ENCODE measurements at regions of chr3 and their contacts with region 1.

Region 1: DNA sequence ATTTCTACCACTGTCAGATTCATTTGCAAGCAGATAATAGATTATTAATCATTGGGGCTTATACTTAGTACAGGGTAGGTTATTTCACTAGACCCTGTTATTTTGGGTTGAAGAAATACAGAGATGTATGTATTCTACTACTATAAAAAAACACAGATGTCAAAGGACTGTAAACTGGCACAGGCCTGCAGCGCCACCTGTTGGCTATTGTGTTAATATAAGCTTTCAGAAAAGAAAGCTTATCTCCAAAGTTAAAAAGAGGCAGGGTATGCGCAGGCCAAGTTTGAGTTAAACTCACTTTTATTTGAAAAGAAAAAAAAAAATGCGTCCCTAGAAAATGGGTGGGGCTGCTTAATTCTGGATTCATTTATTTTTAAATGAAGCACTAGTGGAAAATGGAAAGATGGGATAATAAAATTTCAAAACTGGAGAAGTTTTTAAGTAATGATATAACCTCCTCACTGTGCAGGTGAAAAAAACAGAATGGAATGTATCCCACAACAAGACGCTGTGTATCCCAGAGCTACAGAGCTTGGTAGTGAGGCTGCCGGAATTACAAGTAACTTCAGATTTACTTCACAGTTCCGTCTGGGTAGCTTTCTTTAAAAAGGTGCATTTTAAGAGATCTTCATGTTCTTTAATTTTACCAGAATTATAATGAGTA is 407.2 kb upstream of the TGFBR2 start:
- DNase-seq: peak; percentile 76
- H3K4me3 Mint-ChIP-seq: no peak overlapping the region
- H3K27ac Mint-ChIP-seq: peak overlapping the region; percentile 12
- H3K4me1 Mint-ChIP-seq: peaks cover 32% of the 10 kb centered on the region
- H3K27me3 Mint-ChIP-seq: no peaks in the 10 kb centered on the region
- CTCF ChIP-seq: peak; percentile 60

Region 2: DNA sequence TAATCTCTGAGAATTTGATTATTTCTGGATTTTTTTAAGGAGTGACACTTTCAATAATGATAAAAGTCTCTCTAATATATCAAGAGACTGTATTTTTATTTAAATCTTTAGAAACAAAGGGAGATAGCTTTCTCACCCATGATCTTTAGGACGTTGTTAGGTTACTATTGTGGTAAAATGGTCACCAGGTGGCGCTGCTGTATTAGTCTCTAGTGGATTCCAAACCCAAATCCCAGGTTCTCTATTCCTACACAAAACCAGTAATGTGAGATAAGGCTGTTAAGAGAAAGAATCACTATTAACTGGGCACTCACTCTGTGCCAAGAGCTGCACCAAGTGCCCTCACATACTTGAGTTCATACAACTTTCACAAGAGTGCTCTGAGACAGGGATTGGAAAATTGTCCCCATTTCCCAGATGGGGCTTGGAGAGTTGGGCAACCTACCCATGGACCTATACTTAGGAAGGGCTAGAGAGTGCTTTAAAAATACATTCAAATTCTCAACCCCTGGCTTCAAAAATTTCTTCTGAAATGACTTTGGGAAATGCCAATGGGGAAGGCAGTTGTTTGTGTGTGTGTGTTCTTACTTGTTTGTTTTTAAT is 186.2 kb before region 1 on chr3:
- CTCF ChIA-PET with region 1: interaction called, 17 read pairs
- POLR2A ChIA-PET with region 1: interaction called, 3 read pairs
- intact Hi-C with region 1: no loop called
- DNase-seq: peak; percentile 82
- H3K4me3 Mint-ChIP-seq: no peak overlapping the region
- H3K27ac Mint-ChIP-seq: no peak overlapping the region
- H3K4me1 Mint-ChIP-seq: no peaks in the 10 kb centered on the region
- H3K27me3 Mint-ChIP-seq: no peaks in the 10 kb centered on the region
- CTCF ChIP-seq: peak; percentile 53

Region 3: GRCh38 chr3:30112902-30113484 is 86.2 kb before region 1 on chr3:
- CTCF ChIA-PET with region 1: interaction called, 70 read pairs
- POLR2A ChIA-PET with region 1: interaction called, 5 read pairs
- intact Hi-C with region 1: loop called (anchors 1 kb)
- DNase-seq: peak; percentile 46
- H3K4me3 Mint-ChIP-seq: no peak overlapping the region
- H3K27ac Mint-ChIP-seq: no peak overlapping the region
- H3K4me1 Mint-ChIP-seq: peaks cover 16% of the 10 kb centered on the region
- H3K27me3 Mint-ChIP-seq: no peaks in the 10 kb centered on the region
- CTCF ChIP-seq: peak; percentile 66

Region 4: DNA sequence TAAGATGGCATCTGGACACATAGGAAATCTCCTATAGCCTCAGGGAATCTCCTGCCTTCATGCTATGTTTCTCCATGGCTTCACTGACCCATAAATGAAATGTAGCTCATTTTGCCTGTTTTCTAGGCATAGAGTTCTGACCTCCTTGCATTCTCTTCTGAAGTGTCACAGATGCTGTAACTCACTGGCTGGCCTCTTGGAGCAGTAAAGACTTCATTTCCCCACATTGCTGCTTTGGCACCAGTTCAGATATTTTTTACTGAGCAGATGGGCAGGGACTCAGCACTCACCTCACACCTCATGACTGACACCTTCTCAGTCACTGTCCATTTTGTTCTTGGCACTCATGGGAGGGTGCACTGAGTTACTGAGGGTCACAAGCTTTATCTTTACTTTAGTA is 120.5 kb after region 1 on chr3:
- CTCF ChIA-PET with region 1: interaction called, 11 read pairs
- POLR2A ChIA-PET with region 1: no interaction called
- intact Hi-C with region 1: no loop called
- DNase-seq: peak; percentile 77
- H3K4me3 Mint-ChIP-seq: no peak overlapping the region
- H3K27ac Mint-ChIP-seq: peak overlapping the region; percentile 46
- H3K4me1 Mint-ChIP-seq: peaks cover 23% of the 10 kb centered on the region
- H3K27me3 Mint-ChIP-seq: no peaks in the 10 kb centered on the region
- CTCF ChIP-seq: peak; percentile 24

Region 5: DNA sequence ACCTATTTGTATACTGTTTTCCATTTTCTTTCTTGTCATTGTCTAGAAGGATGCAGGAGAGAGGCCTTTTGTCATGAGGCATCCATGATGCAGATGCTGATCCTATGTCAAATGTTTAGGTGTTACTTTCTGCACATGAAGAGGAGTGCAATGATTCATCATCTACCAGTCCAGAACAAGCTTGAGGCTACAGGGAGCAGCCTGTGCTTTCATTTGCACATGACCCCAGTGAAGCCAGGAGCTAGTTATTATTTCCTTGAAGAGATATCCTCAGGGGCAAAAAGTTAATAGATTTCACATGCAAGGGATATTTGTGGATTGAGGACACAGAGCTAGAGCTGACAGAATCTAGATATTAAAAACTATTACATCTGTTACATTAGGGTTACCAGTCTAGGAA is 202.7 kb after region 1 on chr3:
- CTCF ChIA-PET with region 1: no interaction called
- POLR2A ChIA-PET with region 1: no interaction called
- intact Hi-C with region 1: no loop called
- DNase-seq: peak; percentile 33
- H3K4me3 Mint-ChIP-seq: no peak overlapping the region
- H3K27ac Mint-ChIP-seq: no peak overlapping the region
- H3K4me1 Mint-ChIP-seq: no peaks in the 10 kb centered on the region
- H3K27me3 Mint-ChIP-seq: no peaks in the 10 kb centered on the region
- CTCF ChIP-seq: no peak

Region 6: GRCh38 chr3:30751610-30752299 is 552.5 kb after region 1 on chr3:
- CTCF ChIA-PET with region 1: interaction called, 6 read pairs
- POLR2A ChIA-PET with region 1: no interaction called
- intact Hi-C with region 1: loop called (anchors 1 kb)
- DNase-seq: peak; percentile 52
- H3K4me3 Mint-ChIP-seq: no peak overlapping the region
- H3K27ac Mint-ChIP-seq: no peak overlapping the region
- H3K4me1 Mint-ChIP-seq: peaks cover 6% of the 10 kb centered on the region
- H3K27me3 Mint-ChIP-seq: no peaks in the 10 kb centered on the region
- CTCF ChIP-seq: no peak

Measured in MCF 10A (cell line).